CD8-positive, alpha-beta memory T cell (primary cell): ENCODE measurements at regions of chr14 and their contacts with region 1.

Region 1: GRCh38 chr14:52313903-52314594 is at the start of gene PTGER2:
- DNase-seq: peak; percentile 55 to 86 (median 78)
- H3K4me3 ChIP-seq: peak within 1 kb of the TSS; percentile 68
- H3K4me3 Mint-ChIP-seq: peak within 1 kb of the TSS; percentile 92 to 100 (median 97)
- H3K27ac ChIP-seq: peak within 1 kb of the TSS; percentile 70
- H3K27ac Mint-ChIP-seq: peak within 1 kb of the TSS; percentile 85 to 99 (median 96)
- H3K4me1 ChIP-seq: peaks cover 68% of the 10 kb centered on the region
- H3K4me1 Mint-ChIP-seq: peaks cover 63 to 87% (median 85%) of the 10 kb centered on the region in 3 donors
- H3K27me3 ChIP-seq: no peaks in the 10 kb centered on the region
- H3K27me3 Mint-ChIP-seq: peaks cover 0 to 2% of the 10 kb centered on the region in 2 donors
- total RNA-seq, gene PTGER2: 34.4 to 35.6 TPM

Region 2: DNA sequence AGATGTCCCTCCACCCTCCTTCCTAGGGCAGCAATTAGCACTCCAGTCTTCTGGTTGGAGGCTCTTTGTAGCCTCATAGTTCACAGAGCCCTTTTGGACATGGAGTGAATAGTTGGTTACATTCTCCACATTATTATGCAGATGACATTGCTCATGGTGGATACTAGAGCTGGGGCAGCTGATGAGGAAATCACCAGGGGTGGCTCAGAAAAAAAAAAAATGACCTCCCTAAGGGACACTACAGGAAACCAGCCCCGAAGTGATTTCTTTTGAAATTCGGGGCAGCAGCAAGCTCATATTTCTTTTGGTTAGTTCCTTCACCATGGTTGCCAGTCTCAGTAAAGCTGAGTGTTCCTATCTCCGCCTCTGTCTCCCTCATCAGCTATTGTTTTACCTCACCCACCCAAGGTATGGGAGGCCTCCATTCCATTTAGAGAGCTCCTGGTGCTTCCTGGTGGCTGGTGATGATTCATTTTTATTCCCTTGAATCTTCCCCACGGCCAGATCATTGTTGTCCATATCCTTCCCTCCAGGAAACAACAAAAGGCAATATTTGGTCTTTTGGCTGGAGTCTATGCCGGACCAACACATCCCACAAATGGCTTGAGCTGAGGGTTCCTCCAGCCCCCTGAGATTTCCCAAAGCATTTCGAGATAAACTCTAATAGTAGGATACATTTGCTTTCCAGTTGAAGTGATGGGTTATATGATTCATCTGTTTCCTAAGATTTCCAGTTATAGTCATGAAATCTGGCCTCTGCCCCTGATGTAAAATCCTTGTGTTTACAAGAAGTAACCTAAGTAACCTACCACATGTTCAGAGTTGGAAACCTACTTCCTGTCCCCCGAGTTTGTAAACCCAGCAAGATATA is 189.0 kb before region 1 on chr14:
- CTCF ChIA-PET with region 1: no interaction called
- POLR2A ChIA-PET with region 1: no interaction called
- DNase-seq: peak in 2 of 5 donors; percentile 13 to 32
- H3K4me3 ChIP-seq: no peak overlapping the region
- H3K4me3 Mint-ChIP-seq: peak overlapping the region in 5 of 7 donors; percentile 2 to 51 (median 24)
- H3K27ac ChIP-seq: no peak overlapping the region
- H3K27ac Mint-ChIP-seq: peak overlapping the region in 3 of 8 donors; percentile 1 to 58 (median 51)
- H3K4me1 ChIP-seq: peaks cover 14% of the 10 kb centered on the region
- H3K4me1 Mint-ChIP-seq: peaks cover 17 to 25% (median 22%) of the 10 kb centered on the region in 3 donors
- H3K27me3 ChIP-seq: no peaks in the 10 kb centered on the region
- H3K27me3 Mint-ChIP-seq: peaks cover 0 to 2% of the 10 kb centered on the region in 2 donors

Region 3: DNA sequence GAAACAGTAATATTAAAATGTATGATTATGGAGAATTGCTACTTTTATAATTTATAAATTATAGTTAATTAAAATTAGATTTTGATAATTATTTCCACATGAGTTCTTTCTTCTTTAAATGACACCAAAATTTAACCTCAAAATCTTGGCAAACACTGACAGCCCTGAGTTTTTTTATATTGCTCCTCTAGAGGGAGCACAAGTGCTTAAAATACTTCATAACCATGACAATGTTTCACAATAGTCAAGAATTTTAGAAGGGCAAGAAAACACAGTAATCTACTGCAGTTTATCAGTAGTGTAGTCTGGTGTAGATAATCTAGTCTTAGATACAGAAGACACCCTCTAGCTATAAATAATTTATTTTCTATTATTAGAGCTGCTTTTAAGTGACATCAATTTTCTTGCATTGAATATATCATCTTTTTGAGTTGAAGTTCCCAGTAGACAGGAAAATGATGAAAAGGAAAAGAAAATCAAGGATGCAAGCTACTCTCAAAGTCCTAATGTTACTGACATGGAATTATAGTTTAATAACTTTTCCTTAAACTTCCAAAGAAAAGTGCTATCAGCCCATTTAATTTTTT is 14.3 kb before region 1 on chr14:
- CTCF ChIA-PET with region 1: interaction called, 21 read pairs
- POLR2A ChIA-PET with region 1: interaction called, 4 read pairs
- DNase-seq: peak in 2 of 5 donors; percentile 48 to 50
- H3K4me3 ChIP-seq: no peak overlapping the region
- H3K4me3 Mint-ChIP-seq: no peak overlapping the region
- H3K27ac ChIP-seq: no peak overlapping the region
- H3K27ac Mint-ChIP-seq: peak overlapping the region in 3 of 8 donors; percentile 14 to 88 (median 82)
- H3K4me1 ChIP-seq: peaks cover 15% of the 10 kb centered on the region
- H3K4me1 Mint-ChIP-seq: peaks cover 51 to 82% (median 62%) of the 10 kb centered on the region in 3 donors
- H3K27me3 ChIP-seq: no peaks in the 10 kb centered on the region
- H3K27me3 Mint-ChIP-seq: peaks cover 0 to 3% of the 10 kb centered on the region in 2 donors

Region 4: DNA sequence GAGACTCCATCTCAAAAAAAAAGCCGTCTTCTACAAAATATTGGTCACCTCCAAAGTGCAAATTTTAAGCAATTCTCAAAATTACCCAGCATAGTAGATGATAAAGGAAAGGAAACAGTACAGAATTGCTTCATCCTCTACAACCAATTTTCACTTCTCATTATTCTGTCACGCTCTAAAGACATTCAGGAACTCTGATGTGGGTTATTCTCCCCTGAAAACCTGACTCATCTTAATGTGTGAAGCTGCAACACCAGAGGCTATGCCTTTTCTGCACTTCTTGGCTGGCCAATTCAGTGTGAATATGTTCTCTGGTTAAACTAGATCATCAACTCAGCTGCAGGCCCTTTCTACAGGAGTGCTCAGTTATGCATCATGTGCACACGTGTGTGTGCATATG is 11.1 kb after region 1 on chr14:
- CTCF ChIA-PET with region 1: interaction called, 7 read pairs
- POLR2A ChIA-PET with region 1: interaction called, 17 read pairs
- DNase-seq: peak in 2 of 5 donors; percentile 36 to 55
- H3K4me3 ChIP-seq: no peak overlapping the region
- H3K4me3 Mint-ChIP-seq: peak overlapping the region; percentile 29 to 73 (median 66)
- H3K27ac ChIP-seq: no peak overlapping the region
- H3K27ac Mint-ChIP-seq: peak overlapping the region; percentile 70 to 95 (median 86)
- H3K4me1 ChIP-seq: peaks cover 50% of the 10 kb centered on the region
- H3K4me1 Mint-ChIP-seq: peaks cover 88 to 96% (median 92%) of the 10 kb centered on the region in 3 donors
- H3K27me3 ChIP-seq: no peaks in the 10 kb centered on the region
- H3K27me3 Mint-ChIP-seq: no peaks in the 10 kb centered on the region